Naive thymus-derived CD4-positive, alpha-beta T cell (primary cell): ENCODE measurements at regions of chr3 and their contacts with region 1.

Region 1: GRCh38 chr3:33440323-33441232 is at the start of gene UBP1:
- DNase-seq: peak; percentile 90 to 99 (median 97)
- ATAC-seq: peak; percentile 91
- H3K4me3 ChIP-seq: peak within 1 kb of the TSS; percentile 82
- H3K4me3 Mint-ChIP-seq: peak within 1 kb of the TSS; percentile 93 to 100 (median 100)
- H3K27ac ChIP-seq: peak within 1 kb of the TSS; percentile 91
- H3K27ac Mint-ChIP-seq: peak within 1 kb of the TSS; percentile 99 to 100 (median 100)
- H3K4me1 ChIP-seq: peaks cover 30 to 35% of the 10 kb centered on the region in 2 donors
- H3K4me1 Mint-ChIP-seq: peaks cover 28 to 56% (median 53%) of the 10 kb centered on the region in 7 donors
- H3K27me3 ChIP-seq: no peaks in the 10 kb centered on the region
- H3K27me3 Mint-ChIP-seq: no peaks in the 10 kb centered on the region
- total RNA-seq, gene UBP1: 61.4 to 116 (median 86.0) TPM

Region 2: DNA sequence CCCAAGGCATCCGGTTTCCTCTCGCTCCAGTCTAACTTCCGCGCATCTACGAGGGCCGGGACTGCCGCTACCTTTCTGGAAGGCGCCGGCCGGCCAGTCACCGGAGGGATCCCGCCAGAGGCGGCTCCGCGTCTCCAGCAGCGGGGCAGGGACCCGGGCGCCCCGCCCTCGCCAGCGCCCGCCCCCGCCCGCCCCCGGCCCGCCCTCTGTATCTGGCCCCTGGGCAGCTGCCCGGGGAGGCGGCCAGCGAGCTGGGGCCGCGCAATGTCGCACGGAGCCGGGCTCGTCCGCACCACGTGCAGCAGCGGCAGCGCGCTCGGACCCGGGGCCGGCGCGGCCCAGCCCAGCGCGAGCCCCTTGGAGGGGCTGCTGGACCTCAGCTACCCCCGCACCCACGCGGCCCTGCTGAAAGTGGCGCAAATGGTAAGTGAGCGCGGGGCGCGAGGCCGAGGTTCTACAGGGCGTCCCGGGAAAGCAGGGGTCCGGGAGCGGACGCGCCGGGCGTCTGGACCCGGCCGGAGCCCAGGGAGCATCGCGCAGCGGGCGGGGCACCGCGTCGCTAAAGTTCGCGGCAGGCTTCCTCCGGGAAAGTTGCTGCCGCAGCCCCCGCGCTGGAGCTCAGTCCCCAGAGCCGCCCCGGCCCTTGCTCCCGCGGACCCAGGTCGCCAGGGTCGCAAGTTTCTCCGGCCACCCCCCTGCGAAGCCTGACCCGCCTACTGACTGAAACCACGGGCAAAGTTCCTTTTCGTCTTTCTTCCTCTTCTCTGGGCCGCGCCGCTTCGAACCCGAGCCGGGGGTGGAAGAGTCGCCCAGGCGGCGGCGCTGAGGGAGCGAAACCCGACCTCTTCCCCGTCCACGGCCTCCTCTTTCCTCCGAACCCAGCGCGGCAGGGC is 1048.7 kb before region 1 on chr3 and contains the start of gene CMTM7:
- CTCF ChIA-PET with region 1: no interaction called
- POLR2A ChIA-PET with region 1: no interaction called
- intact Hi-C with region 1: loop called in 1 of 2 experiments (anchors 10 kb)
- DNase-seq: peak; percentile 33 to 68 (median 62)
- ATAC-seq: peak; percentile 75
- H3K4me3 ChIP-seq: peak within 1 kb of the TSS; percentile 81
- H3K4me3 Mint-ChIP-seq: peak within 1 kb of the TSS; percentile 84 to 99 (median 98)
- H3K27ac ChIP-seq: peak within 1 kb of the TSS; percentile 83
- H3K27ac Mint-ChIP-seq: peak within 1 kb of the TSS; percentile 93 to 100 (median 98)
- H3K4me1 ChIP-seq: peaks cover 17 to 25% of the 10 kb centered on the region in 2 donors
- H3K4me1 Mint-ChIP-seq: peaks cover 30 to 70% (median 55%) of the 10 kb centered on the region in 7 donors
- H3K27me3 ChIP-seq: no peaks in the 10 kb centered on the region
- H3K27me3 Mint-ChIP-seq: no peaks in the 10 kb centered on the region
- total RNA-seq, gene CMTM7: 38.6 to 60.1 (median 49.5) TPM

Region 3: GRCh38 chr3:32570421-32571191 is 870.0 kb before region 1 on chr3 and contains the start of gene DYNC1LI1:
- CTCF ChIA-PET with region 1: no interaction called
- POLR2A ChIA-PET with region 1: no interaction called
- intact Hi-C with region 1: loop called (anchors 2 to 10 kb)
- DNase-seq: peak; percentile 81 to 96 (median 88)
- ATAC-seq: peak; percentile 98
- H3K4me3 ChIP-seq: peak within 1 kb of the TSS; percentile 68
- H3K4me3 Mint-ChIP-seq: peak within 1 kb of the TSS; percentile 84 to 96 (median 92)
- H3K27ac ChIP-seq: peak within 1 kb of the TSS; percentile 90
- H3K27ac Mint-ChIP-seq: peak within 1 kb of the TSS; percentile 71 to 93 (median 86)
- H3K4me1 ChIP-seq: peaks cover 5 to 17% of the 10 kb centered on the region in 2 donors
- H3K4me1 Mint-ChIP-seq: peaks cover 0 to 39% (median 31%) of the 10 kb centered on the region in 7 donors
- H3K27me3 ChIP-seq: no peaks in the 10 kb centered on the region
- H3K27me3 Mint-ChIP-seq: no peaks in the 10 kb centered on the region
- total RNA-seq, gene DYNC1LI1: 26.1 to 28.5 (median 27.5) TPM

Region 4: GRCh38 chr3:33096093-33096868 is 344.3 kb before region 1 on chr3:
- CTCF ChIA-PET with region 1: no interaction called
- POLR2A ChIA-PET with region 1: interaction called, 5 read pairs
- intact Hi-C with region 1: loop called in 1 of 2 experiments (anchors 2 kb)
- DNase-seq: peak in 8 of 9 donors; percentile 23 to 52 (median 39)
- ATAC-seq: peak; percentile 71
- H3K4me3 ChIP-seq: peak overlapping the region; percentile 90
- H3K4me3 Mint-ChIP-seq: peak overlapping the region; percentile 90 to 98 (median 94)
- H3K27ac ChIP-seq: peak overlapping the region; percentile 71
- H3K27ac Mint-ChIP-seq: peak overlapping the region; percentile 66 to 87 (median 80)
- H3K4me1 ChIP-seq: peaks cover 0 to 17% of the 10 kb centered on the region in 2 donors
- H3K4me1 Mint-ChIP-seq: peaks cover 24 to 45% (median 37%) of the 10 kb centered on the region in 7 donors
- H3K27me3 ChIP-seq: no peaks in the 10 kb centered on the region
- H3K27me3 Mint-ChIP-seq: peaks cover 0 to 4% (median 0%) of the 10 kb centered on the region in 5 donors

Region 5: GRCh38 chr3:33186524-33187367 is 253.8 kb before region 1 on chr3:
- CTCF ChIA-PET with region 1: no interaction called
- POLR2A ChIA-PET with region 1: no interaction called
- intact Hi-C with region 1: no loop called
- DNase-seq: no peak
- ATAC-seq: no peak
- H3K4me3 ChIP-seq: no peak overlapping the region
- H3K4me3 Mint-ChIP-seq: no peak overlapping the region
- H3K27ac ChIP-seq: no peak overlapping the region
- H3K27ac Mint-ChIP-seq: no peak overlapping the region
- H3K4me1 ChIP-seq: no peaks in the 10 kb centered on the region
- H3K4me1 Mint-ChIP-seq: no peaks in the 10 kb centered on the region
- H3K27me3 ChIP-seq: no peaks in the 10 kb centered on the region
- H3K27me3 Mint-ChIP-seq: peaks cover 10 to 31% (median 16%) of the 10 kb centered on the region in 5 donors

Region 6: GRCh38 chr3:33364531-33365128 is 75.9 kb before region 1 on chr3:
- CTCF ChIA-PET with region 1: no interaction called
- POLR2A ChIA-PET with region 1: no interaction called
- intact Hi-C with region 1: no loop called
- DNase-seq: no peak
- ATAC-seq: no peak
- H3K4me3 ChIP-seq: no peak overlapping the region
- H3K4me3 Mint-ChIP-seq: no peak overlapping the region
- H3K27ac ChIP-seq: no peak overlapping the region
- H3K27ac Mint-ChIP-seq: peak overlapping the region in 1 of 9 donors; percentile 79
- H3K4me1 ChIP-seq: no peaks in the 10 kb centered on the region
- H3K4me1 Mint-ChIP-seq: peaks cover 0 to 6% (median 0%) of the 10 kb centered on the region in 7 donors
- H3K27me3 ChIP-seq: no peaks in the 10 kb centered on the region
- H3K27me3 Mint-ChIP-seq: peaks cover 0 to 22% (median 0%) of the 10 kb centered on the region in 5 donors

Region 7: DNA sequence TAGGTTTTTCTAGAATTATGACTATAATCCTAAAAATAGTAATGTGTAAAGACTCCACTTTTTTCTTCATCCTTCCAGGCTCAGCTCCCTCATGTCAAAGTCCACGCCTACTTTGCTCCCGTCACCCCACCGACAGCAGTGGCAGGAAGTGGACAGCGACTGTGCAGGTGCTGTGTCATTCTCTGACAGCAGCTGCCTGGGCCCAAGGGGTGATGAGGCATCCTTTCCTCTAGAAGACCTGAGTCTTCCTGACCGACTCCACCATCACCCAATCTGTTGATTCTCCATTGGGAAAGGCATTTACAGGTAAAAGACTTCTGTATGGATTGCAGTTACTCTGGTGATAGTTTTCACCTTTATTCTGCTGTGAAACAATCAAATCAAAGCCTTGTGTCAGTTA is 55.2 kb before region 1 on chr3:
- CTCF ChIA-PET with region 1: no interaction called
- POLR2A ChIA-PET with region 1: no interaction called
- intact Hi-C with region 1: loop called in 1 of 2 experiments (anchors 5 kb)
- DNase-seq: peak in 2 of 9 donors; percentile 4 to 32
- ATAC-seq: peak; percentile 68
- H3K4me3 ChIP-seq: no peak overlapping the region
- H3K4me3 Mint-ChIP-seq: no peak overlapping the region
- H3K27ac ChIP-seq: no peak overlapping the region
- H3K27ac Mint-ChIP-seq: peak overlapping the region in 7 of 9 donors; percentile 13 to 78 (median 38)
- H3K4me1 ChIP-seq: no peaks in the 10 kb centered on the region
- H3K4me1 Mint-ChIP-seq: peaks cover 0 to 15% (median 5%) of the 10 kb centered on the region in 7 donors
- H3K27me3 ChIP-seq: no peaks in the 10 kb centered on the region
- H3K27me3 Mint-ChIP-seq: no peaks in the 10 kb centered on the region

Region 8: DNA sequence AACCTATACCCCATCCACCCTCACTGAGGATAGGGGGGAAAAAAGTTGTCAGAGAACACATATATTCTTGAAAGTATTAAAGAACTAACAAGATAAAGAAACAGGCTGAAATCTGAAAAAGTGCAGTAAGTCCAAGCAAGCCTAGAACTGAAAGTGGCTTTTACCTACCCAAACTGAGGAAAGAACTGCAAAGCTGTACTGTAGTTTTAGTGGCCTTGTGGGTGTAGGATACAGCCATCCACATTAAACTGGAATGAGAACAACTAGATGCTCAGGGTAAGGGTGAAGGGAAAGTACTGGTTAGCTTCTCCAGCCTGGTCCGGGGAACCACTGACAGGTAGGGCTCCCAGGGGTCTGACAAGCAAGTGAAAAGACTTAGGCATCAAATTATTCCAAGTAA is 10.5 kb before region 1 on chr3:
- CTCF ChIA-PET with region 1: interaction called, 5 read pairs
- POLR2A ChIA-PET with region 1: interaction called, 17 read pairs
- intact Hi-C with region 1: no loop called
- DNase-seq: no peak
- ATAC-seq: no peak
- H3K4me3 ChIP-seq: no peak overlapping the region
- H3K4me3 Mint-ChIP-seq: peak overlapping the region in 6 of 10 donors; percentile 12 to 64 (median 38)
- H3K27ac ChIP-seq: no peak overlapping the region
- H3K27ac Mint-ChIP-seq: peak overlapping the region in 8 of 9 donors; percentile 1 to 86 (median 64)
- H3K4me1 ChIP-seq: peaks cover 7 to 10% of the 10 kb centered on the region in 2 donors
- H3K4me1 Mint-ChIP-seq: peaks cover 58 to 81% (median 77%) of the 10 kb centered on the region in 7 donors
- H3K27me3 ChIP-seq: no peaks in the 10 kb centered on the region
- H3K27me3 Mint-ChIP-seq: no peaks in the 10 kb centered on the region

Region 9: GRCh38 chr3:33798411-33799201 is 358.0 kb after region 1 on chr3 and contains the start of gene PDCD6IP:
- CTCF ChIA-PET with region 1: interaction called, 4 read pairs
- POLR2A ChIA-PET with region 1: interaction called, 21 read pairs
- intact Hi-C with region 1: loop called (anchors 1 kb)
- DNase-seq: peak; percentile 80 to 90 (median 86)
- ATAC-seq: peak; percentile 88
- H3K4me3 ChIP-seq: peak within 1 kb of the TSS; percentile 97
- H3K4me3 Mint-ChIP-seq: peak within 1 kb of the TSS; percentile 87 to 100 (median 99)
- H3K27ac ChIP-seq: peak within 1 kb of the TSS; percentile 86
- H3K27ac Mint-ChIP-seq: peak within 1 kb of the TSS; percentile 92 to 100 (median 97)
- H3K4me1 ChIP-seq: peaks cover 21 to 24% of the 10 kb centered on the region in 2 donors
- H3K4me1 Mint-ChIP-seq: peaks cover 40 to 77% (median 67%) of the 10 kb centered on the region in 7 donors
- H3K27me3 ChIP-seq: no peaks in the 10 kb centered on the region
- H3K27me3 Mint-ChIP-seq: peaks cover 0 to 7% (median 0%) of the 10 kb centered on the region in 5 donors
- total RNA-seq, gene PDCD6IP: 139 to 221 (median 202) TPM